ENCODE measurements at regions of chr10 and their contacts with region 1.

Region 1: DNA sequence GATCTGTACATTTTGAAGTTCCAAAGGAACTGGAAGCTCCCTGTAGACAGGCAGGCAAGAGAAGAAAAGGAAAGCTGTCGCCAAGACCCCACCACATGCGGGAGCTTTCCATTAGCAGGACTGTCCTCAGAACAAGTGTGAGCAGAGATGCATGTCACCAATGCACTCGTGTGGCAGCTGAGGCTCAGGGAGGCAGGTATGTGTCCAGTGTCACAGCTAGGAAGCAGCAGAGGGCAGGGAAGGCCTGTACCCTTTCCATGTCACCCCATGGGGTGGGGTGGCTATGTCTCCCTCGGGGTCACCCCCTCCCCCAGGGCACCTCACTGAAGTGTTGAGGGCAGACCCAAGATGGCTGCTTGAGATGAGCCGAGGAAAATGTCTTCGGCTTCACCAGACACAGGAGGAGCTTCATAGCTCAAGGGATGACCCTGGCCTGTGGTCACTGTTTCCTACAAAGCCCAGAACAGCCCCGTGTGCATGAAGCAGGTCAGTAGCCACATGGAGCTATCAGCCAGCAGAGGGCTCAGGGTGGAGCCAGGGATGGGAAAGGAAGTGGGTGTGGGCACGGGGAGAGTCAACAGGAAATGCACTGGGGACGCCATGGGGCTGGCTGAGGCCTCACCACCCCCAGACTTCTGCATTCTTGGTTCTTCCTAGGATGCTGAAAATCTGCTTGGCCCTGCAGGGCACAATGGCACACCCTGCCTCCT is 96.6 kb downstream of the FAM53B start:
- DNase-seq: peak; percentile 83
- H3K4me3 Mint-ChIP-seq: peak overlapping the region; percentile 71
- H3K27ac Mint-ChIP-seq: peak overlapping the region; percentile 98
- H3K4me1 Mint-ChIP-seq: peaks cover 77% of the 10 kb centered on the region
- H3K27me3 Mint-ChIP-seq: no peaks in the 10 kb centered on the region

Region 2: GRCh38 chr10:124671486-124672075 is 24.0 kb after region 1 on chr10:
- CTCF ChIA-PET with region 1: interaction called, 10 read pairs
- POLR2A ChIA-PET with region 1: no interaction called
- DNase-seq: peak; percentile 21
- H3K4me3 Mint-ChIP-seq: no peak overlapping the region
- H3K27ac Mint-ChIP-seq: peak overlapping the region; percentile 79
- H3K4me1 Mint-ChIP-seq: peaks cover 60% of the 10 kb centered on the region
- H3K27me3 Mint-ChIP-seq: no peaks in the 10 kb centered on the region

Region 3: GRCh38 chr10:124697830-124698544 is 50.4 kb after region 1 on chr10:
- CTCF ChIA-PET with region 1: interaction called, 5 read pairs
- POLR2A ChIA-PET with region 1: interaction called, 10 read pairs
- DNase-seq: peak; percentile 43
- H3K4me3 Mint-ChIP-seq: no peak overlapping the region
- H3K27ac Mint-ChIP-seq: peak overlapping the region; percentile 95
- H3K4me1 Mint-ChIP-seq: peaks cover 95% of the 10 kb centered on the region
- H3K27me3 Mint-ChIP-seq: no peaks in the 10 kb centered on the region

Measured in activated CD4-positive, alpha-beta T cell treated with anti-CD3 and anti-CD28 coated beads, Interleukin-2, amount 10 ng/mL, durations not matched to agents 7 days and 5 days (primary cell).